MCF 10A (cell line): ENCODE measurements at regions of chrX and their contacts with region 1.

Region 1: DNA sequence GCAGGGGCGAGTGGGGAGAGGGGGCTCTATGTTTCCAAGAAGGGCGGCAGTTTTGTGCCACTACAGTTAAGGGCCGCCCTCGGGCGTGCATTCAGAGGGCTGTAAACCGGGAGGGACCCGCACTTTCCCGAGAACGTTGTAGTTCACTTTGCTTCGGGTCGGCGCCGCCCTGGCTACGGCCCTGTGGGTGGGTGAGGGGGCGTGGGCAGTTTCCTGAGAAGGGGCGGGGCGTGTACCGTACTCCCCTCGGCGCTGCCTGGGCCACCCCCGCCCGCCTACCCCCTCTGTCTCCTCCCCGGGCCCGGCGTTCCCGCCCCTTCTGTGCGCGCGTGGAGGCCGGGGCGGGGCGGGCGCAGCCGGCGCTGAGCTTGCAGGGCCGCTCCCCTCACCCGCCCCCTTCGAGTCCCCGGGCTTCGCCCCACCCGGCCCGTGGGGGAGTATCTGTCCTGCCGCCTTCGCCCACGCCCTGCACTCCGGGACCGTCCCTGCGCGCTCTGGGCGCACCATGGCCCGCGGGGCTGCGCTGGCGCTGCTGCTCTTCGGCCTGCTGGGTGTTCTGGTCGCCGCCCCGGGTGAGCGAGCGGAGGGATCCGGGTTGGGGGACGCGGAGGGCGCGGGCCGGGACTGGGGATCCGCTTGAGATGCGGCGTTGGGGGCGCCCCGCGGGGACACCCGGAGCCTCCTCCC is at the start of gene CD99:
- DNase-seq: peak; percentile 76
- H3K4me3 Mint-ChIP-seq: peak within 1 kb of the TSS; percentile 94
- H3K27ac Mint-ChIP-seq: peak within 1 kb of the TSS; percentile 96
- H3K4me1 Mint-ChIP-seq: peaks cover 13% of the 10 kb centered on the region
- H3K27me3 Mint-ChIP-seq: no peaks in the 10 kb centered on the region
- CTCF ChIP-seq: no peak
- total RNA-seq, gene CD99: 173 and 176 TPM in 2 replicates

Region 2: DNA sequence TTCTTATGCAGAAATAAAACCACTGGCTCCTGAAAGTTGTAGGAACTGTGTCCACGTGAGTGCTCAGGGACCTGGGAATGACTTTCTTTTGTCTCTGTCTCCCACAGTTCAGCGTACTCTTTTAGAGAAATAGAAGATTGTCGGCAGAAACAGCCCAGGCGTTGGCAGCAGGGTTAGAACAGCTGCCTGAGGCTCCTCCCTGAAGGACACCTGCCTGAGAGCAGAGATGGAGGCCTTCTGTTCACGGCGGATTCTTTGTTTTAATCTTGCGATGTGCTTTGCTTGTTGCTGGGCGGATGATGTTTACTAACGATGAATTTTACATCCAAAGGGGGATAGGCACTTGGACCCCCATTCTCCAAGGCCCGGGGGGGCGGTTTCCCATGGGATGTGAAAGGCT is 49.7 kb after region 1 on chrX:
- CTCF ChIA-PET with region 1: no interaction called
- POLR2A ChIA-PET with region 1: no interaction called
- intact Hi-C with region 1: loop called (anchors 5 kb)
- DNase-seq: no peak
- H3K4me3 Mint-ChIP-seq: no peak overlapping the region
- H3K27ac Mint-ChIP-seq: no peak overlapping the region
- H3K4me1 Mint-ChIP-seq: no peaks in the 10 kb centered on the region
- H3K27me3 Mint-ChIP-seq: no peaks in the 10 kb centered on the region
- CTCF ChIP-seq: no peak